Left ventricle myocardium inferior (tissue), 1 donor: ENCODE measurements at regions of chr12 and their contacts with region 1.

Region 1: DNA sequence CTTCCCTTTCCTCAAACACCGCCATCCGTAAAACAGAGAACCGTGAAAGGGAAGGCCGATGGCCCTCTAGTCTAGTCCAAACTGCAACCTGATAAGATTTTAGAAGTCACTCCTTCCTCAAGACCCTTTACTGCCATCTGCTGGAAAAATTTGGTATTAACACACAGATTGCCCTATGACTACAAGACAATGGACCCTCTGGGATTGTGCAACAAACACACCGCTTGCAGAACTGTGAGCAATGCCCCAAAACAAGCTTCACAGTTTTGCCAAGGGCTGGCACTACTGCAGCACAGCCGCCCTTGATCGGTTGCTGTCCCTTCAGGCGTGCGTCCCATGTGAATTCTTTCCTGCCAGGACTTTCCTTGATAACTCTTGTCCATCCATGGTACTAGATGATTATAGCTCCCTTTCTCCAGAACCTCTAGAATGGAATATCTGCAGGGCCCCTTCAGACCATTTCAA is 23.1 kb downstream of the LLPH start:
- DNase-seq: no peak
- H3K4me3 ChIP-seq: no peak overlapping the region
- H3K27ac ChIP-seq: no peak overlapping the region
- H3K4me1 ChIP-seq: peaks cover 3% of the 10 kb centered on the region
- H3K27me3 ChIP-seq: peaks cover 6% of the 10 kb centered on the region
- CTCF ChIP-seq: peak; percentile 87

Region 2: GRCh38 chr12:64890873-64891468 is 1216.5 kb before region 1 on chr12:
- intact Hi-C with region 1: loop called (anchors 10 kb)
- DNase-seq: no peak
- H3K4me3 ChIP-seq: no peak overlapping the region
- H3K27ac ChIP-seq: no peak overlapping the region
- H3K4me1 ChIP-seq: no peaks in the 10 kb centered on the region
- H3K27me3 ChIP-seq: peaks cover 47% of the 10 kb centered on the region
- CTCF ChIP-seq: peak; percentile 91

Region 3: DNA sequence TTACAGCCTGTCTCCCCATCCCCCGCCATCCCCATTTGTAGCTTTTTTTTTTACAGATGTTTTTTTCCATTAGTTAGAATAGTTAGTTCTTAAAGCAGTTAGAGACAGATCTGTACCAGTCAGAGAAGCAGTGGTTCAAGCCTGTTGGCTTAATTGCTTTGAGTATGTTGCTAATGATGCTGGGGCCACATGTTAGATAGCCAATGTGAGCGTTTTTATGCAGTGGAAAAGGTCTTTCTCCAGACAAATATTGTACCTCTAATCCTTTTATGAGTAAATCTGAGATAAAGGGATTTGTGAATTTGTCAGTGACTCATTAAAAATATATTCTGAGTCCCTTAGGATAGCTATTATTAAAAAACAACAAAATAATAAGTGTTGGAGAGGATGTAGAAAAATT is 674.9 kb before region 1 on chr12:
- intact Hi-C with region 1: no loop called
- DNase-seq: no peak
- H3K4me3 ChIP-seq: no peak overlapping the region
- H3K27ac ChIP-seq: no peak overlapping the region
- H3K4me1 ChIP-seq: peaks cover 10% of the 10 kb centered on the region
- H3K27me3 ChIP-seq: no peaks in the 10 kb centered on the region
- CTCF ChIP-seq: no peak

Region 4: DNA sequence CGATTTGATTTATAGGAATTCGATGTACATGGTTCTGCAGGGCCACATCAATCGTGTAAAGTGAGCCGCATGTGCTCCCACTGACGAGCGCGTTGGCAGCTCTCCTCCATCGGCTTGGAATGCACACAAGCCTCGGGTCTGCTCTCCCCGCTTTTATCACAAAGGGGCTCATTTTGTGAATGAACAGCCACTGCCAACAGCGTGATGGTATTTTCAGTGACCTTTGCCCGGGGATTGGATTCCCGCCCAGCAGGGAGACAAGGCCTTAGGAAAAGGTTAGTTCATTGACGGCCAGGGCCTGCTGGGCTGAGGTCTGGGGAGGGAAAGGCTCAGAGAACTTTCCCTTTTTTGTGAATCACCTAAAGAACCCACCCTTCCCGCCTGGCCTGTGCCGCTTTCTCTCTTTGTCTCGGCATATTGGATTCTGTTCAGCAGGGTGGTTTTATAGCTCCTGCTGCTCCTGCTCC is 596.9 kb before region 1 on chr12:
- intact Hi-C with region 1: no loop called
- DNase-seq: peak; percentile 55
- H3K4me3 ChIP-seq: no peak overlapping the region
- H3K27ac ChIP-seq: no peak overlapping the region
- H3K4me1 ChIP-seq: peaks cover 20% of the 10 kb centered on the region
- H3K27me3 ChIP-seq: no peaks in the 10 kb centered on the region
- CTCF ChIP-seq: no peak

Region 5: DNA sequence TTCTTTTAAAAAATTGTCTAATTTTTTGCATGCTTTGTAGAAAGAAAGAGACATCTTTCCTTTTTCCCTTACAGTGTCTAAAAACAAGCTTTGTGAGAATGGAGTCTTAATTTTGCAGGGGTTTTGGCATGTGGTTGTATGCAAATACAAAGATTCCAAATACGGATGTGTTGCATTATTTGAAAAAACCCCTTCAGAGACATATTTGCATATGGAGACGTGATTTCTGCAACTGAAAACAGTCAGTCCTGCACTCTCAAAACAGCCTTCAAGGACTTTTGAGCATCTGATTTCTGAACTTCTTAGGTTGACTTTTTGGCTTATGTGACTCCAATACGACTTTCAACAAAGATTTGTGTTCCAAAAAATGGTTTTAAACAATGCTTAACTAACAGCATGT is 89.3 kb after region 1 on chr12:
- intact Hi-C with region 1: no loop called
- DNase-seq: no peak
- H3K4me3 ChIP-seq: no peak overlapping the region
- H3K27ac ChIP-seq: no peak overlapping the region
- H3K4me1 ChIP-seq: peaks cover 45% of the 10 kb centered on the region
- H3K27me3 ChIP-seq: no peaks in the 10 kb centered on the region
- CTCF ChIP-seq: no peak

Region 6: GRCh38 chr12:66321435-66321834 is 214.0 kb after region 1 on chr12:
- intact Hi-C with region 1: no loop called
- DNase-seq: no peak
- H3K4me3 ChIP-seq: no peak overlapping the region
- H3K27ac ChIP-seq: no peak overlapping the region
- H3K4me1 ChIP-seq: no peaks in the 10 kb centered on the region
- H3K27me3 ChIP-seq: no peaks in the 10 kb centered on the region
- CTCF ChIP-seq: no peak